Keratinocyte (primary cell): ENCODE measurements at regions of chr13 and their contacts with region 1.

Region 1: DNA sequence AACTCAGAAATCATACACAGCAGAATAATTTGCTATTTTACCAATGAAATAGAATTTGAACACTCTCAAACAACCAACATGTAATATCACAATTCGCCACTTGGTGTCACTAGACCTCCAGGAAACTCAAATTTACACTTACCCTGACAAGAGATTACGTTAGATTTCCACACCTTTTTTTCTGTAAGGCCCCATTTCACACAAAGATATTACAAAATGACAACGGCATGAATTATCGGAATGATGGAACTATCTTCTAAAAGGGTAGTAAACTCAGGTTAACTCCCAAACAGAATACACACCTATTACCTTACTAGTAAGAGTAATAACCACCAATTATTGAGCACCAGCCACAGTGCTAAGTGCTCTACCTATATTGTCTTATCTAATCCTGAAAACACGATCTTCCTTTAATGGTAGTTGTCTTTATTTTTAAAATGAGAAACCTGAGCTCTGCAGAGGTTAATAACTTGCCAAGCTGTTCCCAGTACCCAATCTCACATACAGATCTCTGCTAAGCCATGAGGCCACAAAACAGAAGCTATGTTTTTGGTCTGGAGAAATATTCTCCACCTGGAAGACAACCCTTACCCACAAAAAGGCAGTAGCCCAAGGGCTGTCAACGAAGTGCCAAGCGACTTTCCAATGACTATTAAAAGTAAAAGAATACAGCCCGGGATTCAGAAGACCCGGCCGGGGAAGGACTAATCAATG is 152.4 kb downstream of the DCLK1 start:
- DNase-seq: no peak
- H3K4me3 ChIP-seq: no peak overlapping the region
- H3K27ac ChIP-seq: no peak overlapping the region
- H3K4me1 ChIP-seq: peaks cover 12% of the 10 kb centered on the region
- H3K27me3 ChIP-seq: no peaks in the 10 kb centered on the region
- CTCF ChIP-seq: peak in 2 of 3 experiments; percentile 46 to 69

Region 2: DNA sequence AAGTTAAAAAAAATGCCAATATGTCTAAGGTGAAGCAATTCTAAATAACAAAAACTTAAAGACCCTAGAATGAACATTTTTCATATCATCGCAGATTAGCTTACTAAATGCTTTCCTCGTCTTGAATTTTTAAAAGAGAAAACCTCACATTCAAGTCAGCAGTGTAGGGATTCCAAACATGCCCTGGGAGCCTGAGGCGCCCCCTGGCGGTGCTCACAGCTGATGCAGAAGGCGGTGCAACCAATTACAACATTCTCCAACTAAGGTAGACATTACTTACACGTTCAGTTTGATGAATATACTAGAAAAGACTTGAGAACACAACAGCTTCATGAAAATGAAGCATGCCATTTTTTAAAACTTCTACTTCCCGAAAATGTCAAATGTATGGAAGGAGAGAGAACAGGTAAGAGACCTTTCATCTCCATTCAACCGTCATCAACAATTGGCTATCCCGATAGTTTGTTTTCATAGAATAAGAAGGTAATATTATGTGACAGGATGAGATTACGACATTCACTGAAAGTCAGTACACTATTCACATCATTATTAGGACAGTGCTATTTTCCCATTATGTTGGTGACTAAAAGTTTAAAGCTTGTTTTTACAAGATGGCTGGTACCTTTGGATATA is 152.0 kb before region 1 on chr13:
- dilution Hi-C with region 1: no loop called
- DNase-seq: no peak
- H3K4me3 ChIP-seq: no peak overlapping the region
- H3K27ac ChIP-seq: no peak overlapping the region
- H3K4me1 ChIP-seq: no peaks in the 10 kb centered on the region
- H3K27me3 ChIP-seq: no peaks in the 10 kb centered on the region
- CTCF ChIP-seq: peak in 1 of 3 experiments; percentile 16

Region 3: DNA sequence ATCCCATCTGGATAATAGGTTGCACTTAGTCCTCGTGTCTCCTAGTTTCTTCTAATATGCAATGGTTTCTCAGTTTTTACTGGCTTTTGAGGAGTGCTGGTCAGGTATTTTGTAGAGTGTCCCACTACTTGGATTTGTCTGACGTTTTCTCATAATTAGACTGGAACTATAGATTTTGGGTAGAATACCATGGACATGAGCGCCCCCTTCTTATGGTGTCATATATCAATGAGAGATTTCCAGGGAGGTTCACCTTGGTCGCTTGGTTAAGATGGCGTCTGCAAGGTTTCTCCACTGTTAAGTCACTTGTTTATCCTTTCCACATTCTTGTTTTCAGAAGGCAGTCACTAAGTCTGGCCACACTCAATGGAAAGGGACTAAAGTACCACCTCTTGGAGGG is 228.9 kb after region 1 on chr13:
- dilution Hi-C with region 1: no loop called
- DNase-seq: no peak
- H3K4me3 ChIP-seq: no peak overlapping the region
- H3K27ac ChIP-seq: no peak overlapping the region
- H3K4me1 ChIP-seq: no peaks in the 10 kb centered on the region
- H3K27me3 ChIP-seq: no peaks in the 10 kb centered on the region
- CTCF ChIP-seq: no peak

Region 4: DNA sequence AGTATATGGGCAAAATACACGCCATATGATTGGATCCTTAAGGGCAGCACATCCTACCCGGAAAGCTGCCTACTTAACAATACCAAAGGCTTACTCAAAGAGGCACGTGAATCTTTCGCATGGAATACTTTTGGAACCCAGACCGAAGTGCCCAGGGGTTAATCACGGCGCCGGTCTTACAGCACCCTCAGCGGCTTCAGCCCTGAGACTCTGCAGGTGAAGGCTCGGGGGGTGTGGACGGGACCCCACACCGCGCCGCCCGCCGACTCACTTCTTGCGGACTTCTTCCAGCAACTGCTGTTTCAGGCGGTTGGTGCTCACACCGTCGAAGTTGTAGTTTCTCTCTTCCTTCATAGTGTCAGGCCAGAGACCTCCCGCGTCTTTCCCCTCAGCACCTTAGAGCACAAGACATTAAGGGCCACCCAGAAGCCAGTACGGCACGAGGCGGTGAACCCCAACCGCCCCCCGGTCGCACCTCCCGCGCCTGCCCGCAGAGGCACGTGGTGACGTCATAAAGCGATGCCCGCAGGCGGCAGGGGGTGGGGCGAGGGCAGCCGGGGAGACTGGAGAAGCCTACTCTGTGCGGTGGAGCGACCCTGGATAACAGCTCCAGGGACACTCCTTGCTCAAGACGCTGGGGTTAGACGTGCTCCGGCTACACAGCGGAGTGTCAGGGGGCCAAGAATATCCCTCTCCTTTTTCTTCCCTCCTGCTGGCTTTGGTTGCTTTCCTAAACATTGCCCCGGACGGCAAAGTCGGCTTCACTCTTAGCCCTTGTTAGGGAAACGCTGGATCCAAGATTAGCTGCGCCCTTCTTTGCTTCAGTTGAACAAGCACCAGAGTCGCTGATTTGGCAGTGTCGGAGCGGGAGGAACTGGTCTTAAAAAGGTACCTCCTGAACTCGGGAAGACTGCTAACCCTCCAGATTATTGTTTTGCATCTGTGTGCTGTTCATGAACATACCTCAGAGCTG is 318.9 kb after region 1 on chr13 and contains the start of gene CCDC169:
- dilution Hi-C with region 1: loop called (anchors 25 kb)
- DNase-seq: no peak
- H3K4me3 ChIP-seq: peak within 1 kb of the TSS; percentile 44 to 86 (median 66)
- H3K27ac ChIP-seq: no peak within 1 kb of the TSS
- H3K4me1 ChIP-seq: no peaks in the 10 kb centered on the region
- H3K27me3 ChIP-seq: no peaks in the 10 kb centered on the region
- CTCF ChIP-seq: no peak
- polyA plus RNA-seq, gene CCDC169: 0.17 to 0.46 TPM (median 0.37 TPM) in 3 replicates